Activated naive CD4-positive, alpha-beta T cell treated with anti-CD3 and anti-CD28 coated beads, Interleukin-2, amount 10 ng/mL, durations not matched to agents 7 days and 5 days (primary cell): ENCODE measurements at regions of chr4 and their contacts with region 1.

Region 1: DNA sequence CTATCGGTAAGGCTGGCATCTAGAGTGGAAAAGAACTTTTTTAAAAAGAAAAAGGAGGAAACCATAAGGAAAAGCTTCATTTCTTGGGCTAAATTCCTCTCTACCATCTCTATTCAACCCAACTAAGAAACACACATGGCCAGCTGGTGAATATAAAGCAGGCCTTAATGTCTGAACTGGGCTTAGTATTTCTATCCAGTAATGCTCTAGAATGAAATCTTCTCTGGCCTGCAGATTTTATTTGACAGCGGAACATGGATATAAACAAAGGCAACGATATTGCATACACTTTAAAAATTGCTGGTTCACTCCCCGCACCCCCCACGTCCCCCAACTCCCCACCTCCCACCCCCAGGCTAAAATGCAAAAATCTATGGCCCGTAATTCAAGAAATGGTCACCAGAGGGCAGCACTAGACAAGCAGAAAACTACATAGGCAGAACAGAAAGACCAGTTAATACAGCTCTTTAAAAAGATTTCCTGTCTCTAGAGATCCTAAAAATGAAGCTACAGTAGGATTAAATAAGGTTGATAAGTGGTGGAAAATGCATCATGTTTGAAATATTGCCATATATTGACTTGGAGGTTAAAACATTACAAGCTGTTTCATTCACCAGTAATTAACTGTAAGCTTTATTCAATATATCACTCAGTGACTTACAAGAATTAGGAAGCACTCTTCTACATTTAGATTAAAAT is 155.2 kb upstream of the GALNT7 start:
- DNase-seq: peak; percentile 64
- H3K4me3 Mint-ChIP-seq: no peak overlapping the region
- H3K27ac Mint-ChIP-seq: no peak overlapping the region
- H3K4me1 Mint-ChIP-seq: no peaks in the 10 kb centered on the region
- H3K27me3 Mint-ChIP-seq: no peaks in the 10 kb centered on the region

Region 2: GRCh38 chr4:173057901-173058300 is 44.5 kb after region 1 on chr4:
- CTCF ChIA-PET with region 1: no interaction called
- DNase-seq: no peak
- H3K4me3 Mint-ChIP-seq: no peak overlapping the region
- H3K27ac Mint-ChIP-seq: no peak overlapping the region
- H3K4me1 Mint-ChIP-seq: no peaks in the 10 kb centered on the region
- H3K27me3 Mint-ChIP-seq: peaks cover 4% of the 10 kb centered on the region

Region 3: GRCh38 chr4:173257732-173258717 is 244.6 kb after region 1 on chr4:
- CTCF ChIA-PET with region 1: interaction called, 39 read pairs
- DNase-seq: peak; percentile 69
- H3K4me3 Mint-ChIP-seq: no peak overlapping the region
- H3K27ac Mint-ChIP-seq: no peak overlapping the region
- H3K4me1 Mint-ChIP-seq: no peaks in the 10 kb centered on the region
- H3K27me3 Mint-ChIP-seq: no peaks in the 10 kb centered on the region

Region 4: DNA sequence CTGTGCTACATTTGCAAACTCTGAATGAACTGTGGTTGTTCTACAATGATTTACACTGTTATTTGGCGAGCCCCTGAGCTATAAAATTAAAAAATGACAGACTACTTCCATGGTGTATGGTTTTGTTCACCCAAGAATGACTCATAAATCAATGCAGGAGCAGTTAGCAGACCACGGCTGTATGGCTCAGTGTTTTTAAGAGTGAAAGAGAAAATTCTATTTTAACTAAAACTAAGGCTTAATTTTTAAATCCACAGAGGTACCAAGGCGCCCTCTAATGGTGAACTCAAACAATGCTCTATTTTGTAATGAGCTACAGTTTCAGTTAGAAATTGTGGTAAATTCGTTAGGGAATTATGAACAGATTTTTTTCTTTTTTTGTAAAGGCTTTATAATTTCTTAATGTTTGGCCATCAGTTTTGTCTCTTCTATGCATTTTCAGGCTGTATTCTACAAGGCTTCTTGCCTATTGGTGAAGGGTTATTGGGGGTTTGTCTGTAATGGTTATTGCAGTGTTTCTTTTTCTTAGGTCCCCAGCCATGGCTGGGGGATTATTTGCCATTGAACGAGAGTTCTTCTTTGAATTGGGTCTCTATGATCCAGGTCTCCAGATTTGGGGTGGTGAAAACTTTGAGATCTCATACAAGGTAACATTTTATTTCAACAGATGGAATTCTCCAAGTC is 288.3 kb after region 1 on chr4:
- CTCF ChIA-PET with region 1: interaction called, 66 read pairs
- DNase-seq: peak; percentile 36
- H3K4me3 Mint-ChIP-seq: no peak overlapping the region
- H3K27ac Mint-ChIP-seq: no peak overlapping the region
- H3K4me1 Mint-ChIP-seq: no peaks in the 10 kb centered on the region
- H3K27me3 Mint-ChIP-seq: no peaks in the 10 kb centered on the region

Region 5: DNA sequence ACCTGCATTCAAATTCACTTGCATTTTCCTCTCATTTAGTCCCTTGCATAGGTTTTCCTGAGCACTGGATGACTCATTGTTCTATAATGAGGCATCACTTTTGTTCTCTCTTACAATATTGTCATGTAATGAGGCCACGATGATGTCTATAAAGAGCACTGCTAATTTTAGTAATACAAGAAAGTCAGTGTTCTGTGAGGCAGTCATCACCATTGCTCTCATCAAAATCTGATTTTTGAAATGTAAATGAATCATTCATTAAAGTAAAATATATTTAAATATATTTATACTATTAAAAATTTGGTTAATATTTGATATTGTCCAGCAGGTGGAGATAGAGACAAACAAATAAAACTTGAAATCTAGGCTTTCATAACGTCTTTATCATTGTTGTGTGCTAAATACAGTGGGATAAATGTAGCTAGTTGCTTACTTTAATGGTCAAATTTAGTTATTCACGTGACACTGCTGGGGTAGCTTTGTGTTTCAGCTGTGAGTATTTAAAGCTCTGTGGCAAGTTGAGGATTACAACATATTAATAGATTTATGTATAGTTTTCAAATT is 305.3 kb after region 1 on chr4:
- CTCF ChIA-PET with region 1: interaction called, 10 read pairs
- DNase-seq: no peak
- H3K4me3 Mint-ChIP-seq: no peak overlapping the region
- H3K27ac Mint-ChIP-seq: no peak overlapping the region
- H3K4me1 Mint-ChIP-seq: no peaks in the 10 kb centered on the region
- H3K27me3 Mint-ChIP-seq: no peaks in the 10 kb centered on the region